ENCODE measurements at regions of chr15 and their contacts with region 1.

Region 1: GRCh38 chr15:98177924-98178592 is 217.6 kb downstream of the ARRDC4 start:
- DNase-seq: peak; percentile 53
- ATAC-seq: peak; percentile 94
- H3K4me3 Mint-ChIP-seq: no peak overlapping the region
- H3K27ac Mint-ChIP-seq: no peak overlapping the region
- H3K4me1 Mint-ChIP-seq: peaks cover 23% of the 10 kb centered on the region
- H3K27me3 Mint-ChIP-seq: no peaks in the 10 kb centered on the region; the same call in 1 of the 2 replicates
- CTCF ChIP-seq: peak; percentile 42

Region 2: DNA sequence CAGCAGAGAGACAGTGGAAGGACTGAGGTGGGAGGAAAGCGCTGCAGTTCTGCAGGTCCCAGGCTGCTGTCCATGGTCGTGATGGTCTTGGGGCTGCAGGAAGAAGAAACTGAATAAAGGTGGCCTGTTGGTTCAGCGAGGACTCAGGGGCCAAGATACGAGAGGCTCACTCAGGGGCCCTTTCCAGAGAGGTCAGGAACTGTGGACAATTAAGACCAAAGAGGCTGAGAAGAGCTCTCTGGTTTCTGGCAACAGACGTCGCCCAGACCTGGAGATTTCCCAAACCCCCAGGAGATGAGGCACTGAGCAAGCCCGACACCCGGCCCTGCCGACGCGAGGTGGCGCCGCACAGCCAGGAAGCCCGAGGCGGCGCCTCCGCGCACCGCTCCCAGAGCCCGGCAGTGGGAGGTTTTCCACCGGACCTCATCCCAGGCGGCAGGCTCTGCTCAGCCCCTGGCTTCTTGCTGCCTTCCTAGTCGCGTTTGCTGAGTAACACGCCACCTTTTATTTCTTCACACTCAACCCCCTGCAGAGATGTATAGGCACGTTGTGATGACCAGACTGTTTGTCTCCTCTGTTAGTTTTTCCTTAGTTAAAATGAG is 274.0 kb before region 1 on chr15:
- CTCF ChIA-PET with region 1: interaction called, 51 read pairs
- POLR2A ChIA-PET with region 1: no interaction called
- DNase-seq: peak; percentile 86
- ATAC-seq: peak; percentile 99
- H3K4me3 Mint-ChIP-seq: peak overlapping the region; percentile 33; the same call in 1 of the 2 replicates
- H3K27ac Mint-ChIP-seq: no peak overlapping the region
- H3K4me1 Mint-ChIP-seq: peaks cover 4% of the 10 kb centered on the region
- H3K27me3 Mint-ChIP-seq: peaks cover 2% of the 10 kb centered on the region
- CTCF ChIP-seq: no peak

Region 3: DNA sequence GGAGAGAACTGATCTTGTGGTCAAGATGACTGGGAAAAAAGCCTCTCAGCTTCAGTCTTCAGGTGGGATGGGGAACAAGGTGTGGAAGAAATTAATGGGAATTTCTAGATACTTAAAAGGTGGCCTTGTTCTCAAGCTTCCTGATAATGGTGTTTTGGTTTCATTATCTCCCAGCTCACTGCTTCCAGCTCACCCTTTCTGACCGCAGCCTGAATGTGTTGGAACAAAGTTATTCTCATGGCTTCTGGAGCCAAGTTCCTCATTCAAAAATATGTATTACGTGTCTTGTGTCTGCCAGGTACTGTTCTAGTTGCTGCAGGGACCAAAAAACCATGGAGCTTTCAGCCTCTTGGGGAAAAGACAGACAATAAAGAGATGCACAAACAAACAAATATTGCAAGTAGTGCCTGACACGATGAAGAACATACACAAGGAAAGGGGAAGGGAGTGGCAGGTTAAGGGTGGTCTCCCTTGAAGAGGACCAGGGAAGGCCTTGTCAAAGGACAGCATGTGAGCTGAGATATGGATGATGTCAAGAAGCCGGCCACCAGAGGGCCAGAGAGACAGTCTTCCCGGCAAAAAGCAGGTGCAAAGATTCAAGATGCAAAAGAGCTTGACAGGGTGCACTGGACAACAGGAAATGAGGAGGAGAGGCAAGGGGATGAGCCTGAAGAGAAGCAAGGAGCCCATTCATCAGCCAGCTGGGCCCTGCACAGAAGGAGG is 182.0 kb before region 1 on chr15:
- CTCF ChIA-PET with region 1: interaction called, 26 read pairs
- POLR2A ChIA-PET with region 1: interaction called, 4 read pairs
- DNase-seq: peak; percentile 38
- ATAC-seq: peak; percentile 86
- H3K4me3 Mint-ChIP-seq: no peak overlapping the region
- H3K27ac Mint-ChIP-seq: no peak overlapping the region
- H3K4me1 Mint-ChIP-seq: peaks cover 4% of the 10 kb centered on the region; the same call in 1 of the 2 replicates
- H3K27me3 Mint-ChIP-seq: no peaks in the 10 kb centered on the region
- CTCF ChIP-seq: no peak

Region 4: DNA sequence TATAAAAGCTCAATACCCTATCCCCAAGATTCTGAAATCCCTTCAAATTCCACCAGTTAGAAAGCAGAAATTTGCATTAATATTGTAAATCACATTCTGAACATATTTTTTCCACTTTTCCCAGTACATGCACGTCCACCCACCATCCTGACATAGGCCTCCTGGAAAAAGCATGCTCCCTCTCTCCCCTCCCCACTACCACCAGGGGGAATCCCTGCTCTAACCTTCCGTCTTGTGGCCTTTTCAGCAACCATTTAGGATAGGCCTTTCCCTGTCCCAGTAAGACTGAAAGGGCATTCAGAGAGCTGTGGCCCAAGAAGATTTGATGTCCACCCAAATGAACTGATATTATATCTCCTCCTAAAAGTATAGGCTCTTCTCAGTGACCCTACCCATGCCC is 35.5 kb before region 1 on chr15:
- CTCF ChIA-PET with region 1: interaction called, 42 read pairs
- POLR2A ChIA-PET with region 1: no interaction called
- DNase-seq: peak; percentile 40
- ATAC-seq: peak; percentile 85
- H3K4me3 Mint-ChIP-seq: no peak overlapping the region
- H3K27ac Mint-ChIP-seq: no peak overlapping the region
- H3K4me1 Mint-ChIP-seq: peaks cover 21% of the 10 kb centered on the region
- H3K27me3 Mint-ChIP-seq: no peaks in the 10 kb centered on the region
- CTCF ChIP-seq: no peak

Region 5: GRCh38 chr15:98311566-98312188 is 133.6 kb after region 1 on chr15:
- CTCF ChIA-PET with region 1: interaction called, 12 read pairs
- POLR2A ChIA-PET with region 1: no interaction called
- DNase-seq: peak; percentile 81
- ATAC-seq: peak; percentile 41; the same call in 1 of the 2 replicates
- H3K4me3 Mint-ChIP-seq: no peak overlapping the region
- H3K27ac Mint-ChIP-seq: no peak overlapping the region
- H3K4me1 Mint-ChIP-seq: no peaks in the 10 kb centered on the region
- H3K27me3 Mint-ChIP-seq: peaks cover 3% of the 10 kb centered on the region; the same call in 1 of the 2 replicates
- CTCF ChIP-seq: peak; percentile 89

Region 6: DNA sequence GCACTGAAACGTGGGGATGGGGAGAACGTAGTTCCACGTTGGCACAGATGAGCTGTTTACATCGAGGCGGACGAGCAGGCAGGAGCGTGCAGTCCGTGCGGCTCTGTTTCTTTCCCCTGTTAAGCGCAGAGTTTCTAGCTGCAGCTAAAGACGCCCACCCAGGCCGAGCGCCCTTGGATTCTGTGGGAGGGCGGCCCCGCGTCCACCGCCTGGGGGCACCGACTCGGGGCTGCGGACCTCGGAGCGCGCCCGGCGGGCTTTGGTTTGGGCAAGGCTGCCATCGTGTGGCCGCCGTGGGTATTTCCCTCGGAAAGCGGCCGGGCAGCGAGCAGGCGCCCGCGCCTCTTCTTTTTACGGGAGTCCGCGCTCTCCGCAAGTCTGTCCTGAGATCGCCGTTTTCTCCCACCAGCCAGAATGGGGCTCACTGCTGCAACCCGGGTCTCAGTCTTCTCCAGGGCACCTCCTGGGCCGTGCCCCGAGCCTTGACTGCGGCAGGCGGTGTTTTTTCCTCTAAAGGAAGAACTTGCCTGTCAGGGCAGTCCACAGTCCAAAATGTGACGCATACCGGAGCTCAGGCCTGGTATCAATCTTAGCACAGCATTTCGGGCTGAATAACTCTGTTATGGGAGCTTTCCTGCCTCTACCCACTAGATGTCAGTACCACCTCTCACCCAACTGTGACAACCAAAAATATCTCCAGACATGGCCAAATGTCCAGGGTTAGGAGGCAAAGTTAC is 250.4 kb after region 1 on chr15:
- CTCF ChIA-PET with region 1: interaction called, 11 read pairs
- POLR2A ChIA-PET with region 1: no interaction called
- DNase-seq: peak; percentile 85
- ATAC-seq: peak; percentile 87
- H3K4me3 Mint-ChIP-seq: peak overlapping the region; percentile 58
- H3K27ac Mint-ChIP-seq: no peak overlapping the region
- H3K4me1 Mint-ChIP-seq: no peaks in the 10 kb centered on the region
- H3K27me3 Mint-ChIP-seq: peaks cover 57% of the 10 kb centered on the region
- CTCF ChIP-seq: peak; percentile 82

Region 7: DNA sequence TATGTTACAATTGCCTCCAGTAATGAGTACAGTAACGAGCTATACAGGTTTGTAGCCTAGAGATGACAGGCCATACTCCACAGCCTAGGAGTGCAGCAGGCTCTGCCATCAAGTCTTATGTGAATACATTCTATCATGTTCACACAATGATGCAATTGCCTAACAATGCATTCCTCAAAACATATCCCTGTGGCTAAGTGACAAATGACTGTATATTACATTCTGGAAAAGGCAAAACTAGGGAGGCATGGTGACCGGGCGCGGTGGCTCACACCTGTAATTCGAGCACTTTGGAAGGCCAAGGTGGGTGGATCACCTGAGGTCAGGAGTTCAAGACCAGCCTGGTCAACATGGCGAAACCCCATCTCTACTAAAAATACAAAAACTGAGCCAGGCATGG is 277.9 kb after region 1 on chr15:
- CTCF ChIA-PET with region 1: no interaction called
- POLR2A ChIA-PET with region 1: no interaction called
- DNase-seq: no peak
- ATAC-seq: no peak
- H3K4me3 Mint-ChIP-seq: no peak overlapping the region
- H3K27ac Mint-ChIP-seq: no peak overlapping the region
- H3K4me1 Mint-ChIP-seq: peaks cover 6% of the 10 kb centered on the region
- H3K27me3 Mint-ChIP-seq: peaks cover 9% of the 10 kb centered on the region
- CTCF ChIP-seq: no peak

Measured in WTC11 (cell line).